Posterior vena cava (tissue), 2 donors: ENCODE measurements at regions of chr1 and their contacts with region 1.

Region 1: DNA sequence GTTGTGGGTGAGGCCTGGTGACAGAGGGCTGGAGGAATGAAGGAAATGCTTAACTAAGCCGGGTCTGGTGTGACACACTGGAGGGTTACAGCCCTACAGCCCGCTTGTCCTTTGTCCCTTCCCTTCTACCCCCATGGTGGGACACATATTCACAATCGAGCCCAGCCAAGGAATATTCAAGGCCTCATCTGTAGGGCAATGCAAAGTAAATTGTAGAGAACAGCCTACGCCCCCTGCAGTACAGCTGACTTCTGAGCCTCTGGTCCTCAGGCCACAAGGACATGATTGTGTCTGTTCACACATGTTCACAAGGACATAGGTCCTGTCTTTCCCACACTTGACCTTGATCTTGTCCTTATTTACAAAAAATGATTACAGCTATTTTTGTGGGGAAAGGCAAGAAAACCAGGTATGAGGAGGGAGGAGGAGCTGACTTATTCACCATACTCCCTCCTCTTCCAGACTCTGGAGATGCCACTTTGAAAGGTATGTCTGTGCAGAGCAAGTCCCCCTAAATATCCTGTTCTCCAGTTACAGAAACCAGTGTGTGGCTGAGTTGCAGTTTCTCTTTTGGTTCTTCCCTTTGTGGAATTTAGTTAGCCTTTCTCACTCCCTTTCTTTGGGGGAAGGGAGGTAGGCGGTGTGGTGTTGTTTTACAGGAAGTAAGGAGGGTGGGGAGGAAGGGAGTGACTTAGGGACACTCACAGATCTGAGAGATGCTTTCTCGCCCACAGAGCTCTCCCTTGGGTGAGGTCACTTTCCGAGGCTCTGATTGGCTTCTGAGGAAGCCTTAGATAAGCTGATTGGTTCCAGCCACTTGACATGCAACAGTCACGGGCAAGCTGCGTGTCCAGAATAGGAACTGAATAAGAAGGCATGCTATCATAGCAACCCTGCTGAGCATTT is 14.6 kb downstream of the POLR3GL start:
- DNase-seq: peak; percentile 97

Region 2: GRCh38 chr1:146007506-146008133 is 28.5 kb after region 1 on chr1:
- intact Hi-C with region 1: loop called (anchors 2 kb)
- DNase-seq: no peak

Region 3: DNA sequence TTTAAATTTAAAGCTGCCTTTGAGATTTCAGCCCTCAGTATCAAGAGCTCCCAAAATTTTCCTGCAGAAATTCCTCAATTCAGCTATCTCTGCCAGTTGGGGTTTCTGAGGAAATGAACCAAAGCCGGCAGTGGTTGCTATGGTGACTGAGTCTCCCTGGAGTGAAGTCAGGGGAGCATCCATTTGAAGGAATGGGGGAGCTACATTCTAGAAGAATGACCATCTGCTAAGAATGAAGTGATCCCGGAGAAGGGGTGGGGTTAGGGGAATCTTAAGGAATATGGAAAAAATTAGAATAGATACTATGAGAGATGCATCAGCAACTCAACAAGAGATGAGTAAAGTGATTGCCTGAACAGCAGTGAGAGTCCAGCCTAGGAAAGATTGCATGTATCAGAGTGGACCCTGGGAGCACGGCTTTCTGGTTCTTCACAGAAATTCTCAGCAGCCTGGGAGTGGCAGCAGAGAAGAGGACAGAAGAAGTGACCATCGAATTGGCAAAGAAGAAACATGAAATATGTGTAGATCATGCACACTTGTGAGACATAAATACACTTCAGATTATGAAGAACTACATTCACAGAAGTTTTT is 1358.0 kb after region 1 on chr1:
- intact Hi-C with region 1: no loop called
- DNase-seq: no peak